ENCODE measurements at regions of chr14 and their contacts with region 1.

Region 1: DNA sequence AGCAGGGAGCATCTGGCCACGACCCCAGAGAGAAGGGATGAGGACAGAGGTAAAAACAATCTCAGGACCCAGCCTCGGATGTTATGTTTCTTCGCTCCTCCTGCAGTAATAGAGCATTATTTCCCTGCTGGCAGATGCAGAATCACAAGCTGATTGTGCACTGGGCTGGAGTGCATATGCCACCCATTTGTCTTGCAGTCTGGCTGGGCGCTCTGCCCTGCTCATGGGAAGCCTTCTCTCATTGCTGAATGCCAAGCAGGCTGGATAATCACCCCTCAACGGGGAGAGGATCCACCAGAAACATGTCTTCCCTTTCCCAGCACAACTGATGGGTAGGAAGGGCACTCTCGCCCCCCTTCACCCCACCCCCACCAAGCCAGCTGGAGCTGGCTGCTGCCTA is 8.5 kb upstream of the VASH1 start:
- DNase-seq: no peak
- ATAC-seq: no peak
- H3K4me3 ChIP-seq: no peak overlapping the region
- H3K27ac ChIP-seq: no peak overlapping the region
- H3K4me1 ChIP-seq: no peaks in the 10 kb centered on the region
- H3K27me3 ChIP-seq: peaks cover 27% of the 10 kb centered on the region
- CTCF ChIP-seq: no peak

Region 2: DNA sequence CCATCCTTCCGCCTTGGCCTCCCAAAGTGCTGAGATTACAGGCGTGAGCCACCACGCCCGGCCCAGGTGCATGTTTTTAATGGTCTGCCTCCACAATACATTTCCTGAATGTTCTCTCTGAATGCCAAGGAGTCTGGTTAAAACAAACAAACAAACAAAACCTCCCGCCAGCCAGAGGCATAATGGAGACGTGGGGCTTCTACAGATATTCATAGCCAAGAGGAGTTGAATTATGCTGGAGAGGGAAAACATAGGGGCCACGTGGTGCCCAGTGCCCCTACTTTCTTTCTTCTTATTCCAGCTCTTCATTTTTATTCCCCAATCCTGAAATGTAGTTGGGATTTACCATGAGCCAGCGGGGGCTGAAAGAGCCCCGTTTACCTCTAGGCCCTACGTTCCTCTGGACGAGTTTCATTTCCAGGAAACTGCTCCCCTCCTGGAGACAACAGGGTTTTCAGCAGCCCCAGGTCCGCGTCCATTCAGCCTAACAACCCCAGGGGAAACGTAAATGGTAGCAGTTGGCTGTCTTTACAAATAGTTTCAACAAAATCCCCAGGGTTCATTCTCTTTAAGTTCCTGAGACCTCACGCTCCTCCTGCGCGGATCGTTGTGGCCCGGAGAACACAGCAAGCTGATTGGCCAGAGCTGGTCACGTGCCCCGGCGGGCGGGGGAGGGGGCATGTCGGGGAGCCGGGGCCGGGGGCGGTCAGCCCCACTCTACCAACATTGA is 485.3 kb before region 1 on chr14:
- CTCF ChIA-PET with region 1: no interaction called
- POLR2A ChIA-PET with region 1: no interaction called
- intact Hi-C with region 1: no loop called
- DNase-seq: no peak
- ATAC-seq: no peak
- H3K4me3 ChIP-seq: no peak overlapping the region
- H3K27ac ChIP-seq: no peak overlapping the region
- H3K4me1 ChIP-seq: no peaks in the 10 kb centered on the region
- H3K27me3 ChIP-seq: peaks cover 4% of the 10 kb centered on the region; the same call in 1 of the 2 replicates
- CTCF ChIP-seq: no peak

Region 3: GRCh38 chr14:76784266-76785264 is 31.8 kb after region 1 on chr14:
- CTCF ChIA-PET with region 1: no interaction called
- POLR2A ChIA-PET with region 1: no interaction called
- intact Hi-C with region 1: loop called (anchors 2 kb)
- DNase-seq: peak; percentile 77
- ATAC-seq: peak; percentile 98
- H3K4me3 ChIP-seq: no peak overlapping the region
- H3K27ac ChIP-seq: no peak overlapping the region
- H3K4me1 ChIP-seq: no peaks in the 10 kb centered on the region
- H3K27me3 ChIP-seq: no peaks in the 10 kb centered on the region
- CTCF ChIP-seq: peak; percentile 94

Region 4: DNA sequence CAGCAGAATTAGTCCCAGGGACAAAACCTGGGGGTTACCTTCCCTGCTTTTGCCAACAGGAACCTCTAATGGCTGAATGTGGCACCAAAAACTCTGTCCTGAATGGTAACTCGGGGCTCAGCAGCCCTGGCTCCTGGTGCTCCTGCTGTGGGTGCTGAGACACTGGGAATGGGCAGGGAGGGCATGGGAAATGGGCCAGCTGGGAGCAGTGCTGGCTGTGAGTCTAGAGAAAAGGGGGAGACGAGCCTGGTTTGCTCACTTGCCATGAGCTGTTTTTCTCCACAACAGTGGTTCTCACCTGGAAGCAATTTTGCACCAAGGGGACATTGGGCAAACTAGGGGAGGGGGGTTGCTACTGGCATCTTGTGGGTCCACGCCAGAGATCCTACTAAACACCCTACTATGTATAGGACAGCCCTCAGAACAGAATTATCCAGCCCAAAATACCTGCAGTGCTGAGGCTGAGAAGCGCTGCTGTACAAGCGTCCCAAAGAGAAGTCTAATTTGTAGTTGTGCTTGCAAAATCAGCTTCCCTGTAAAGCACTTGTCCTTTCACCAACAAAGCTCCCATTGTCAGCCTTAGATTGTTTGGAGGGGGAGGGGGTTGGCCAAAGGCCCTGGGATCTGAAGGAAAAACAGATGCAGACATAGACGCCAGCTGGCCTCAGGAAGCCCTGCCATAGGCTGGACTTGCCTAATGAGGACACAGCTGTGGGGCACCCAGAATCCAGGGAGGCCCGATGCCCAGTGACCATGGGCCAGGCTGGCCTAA is 77.1 kb after region 1 on chr14:
- CTCF ChIA-PET with region 1: no interaction called
- POLR2A ChIA-PET with region 1: no interaction called
- intact Hi-C with region 1: no loop called
- DNase-seq: no peak
- ATAC-seq: no peak
- H3K4me3 ChIP-seq: no peak overlapping the region
- H3K27ac ChIP-seq: no peak overlapping the region
- H3K4me1 ChIP-seq: no peaks in the 10 kb centered on the region
- H3K27me3 ChIP-seq: peaks cover 46% of the 10 kb centered on the region
- CTCF ChIP-seq: no peak

Region 5: GRCh38 chr14:77208291-77208969 is 455.7 kb after region 1 on chr14:
- CTCF ChIA-PET with region 1: no interaction called
- POLR2A ChIA-PET with region 1: no interaction called
- intact Hi-C with region 1: no loop called
- DNase-seq: peak; percentile 87
- ATAC-seq: peak; percentile 69
- H3K4me3 ChIP-seq: no peak overlapping the region
- H3K27ac ChIP-seq: no peak overlapping the region
- H3K4me1 ChIP-seq: peaks cover 3% of the 10 kb centered on the region; the same call in 1 of the 2 replicates
- H3K27me3 ChIP-seq: no peaks in the 10 kb centered on the region
- CTCF ChIP-seq: no peak